AG04449 (cell line): ENCODE measurements at regions of chr11 and their contacts with region 1.

Region 1: GRCh38 chr11:64240394-64241174 is at the start of gene FKBP2:
- DNase-seq: peak; percentile 64
- H3K4me3 ChIP-seq: peak within 1 kb of the TSS; percentile 88
- CTCF ChIP-seq: no peak

Region 2: DNA sequence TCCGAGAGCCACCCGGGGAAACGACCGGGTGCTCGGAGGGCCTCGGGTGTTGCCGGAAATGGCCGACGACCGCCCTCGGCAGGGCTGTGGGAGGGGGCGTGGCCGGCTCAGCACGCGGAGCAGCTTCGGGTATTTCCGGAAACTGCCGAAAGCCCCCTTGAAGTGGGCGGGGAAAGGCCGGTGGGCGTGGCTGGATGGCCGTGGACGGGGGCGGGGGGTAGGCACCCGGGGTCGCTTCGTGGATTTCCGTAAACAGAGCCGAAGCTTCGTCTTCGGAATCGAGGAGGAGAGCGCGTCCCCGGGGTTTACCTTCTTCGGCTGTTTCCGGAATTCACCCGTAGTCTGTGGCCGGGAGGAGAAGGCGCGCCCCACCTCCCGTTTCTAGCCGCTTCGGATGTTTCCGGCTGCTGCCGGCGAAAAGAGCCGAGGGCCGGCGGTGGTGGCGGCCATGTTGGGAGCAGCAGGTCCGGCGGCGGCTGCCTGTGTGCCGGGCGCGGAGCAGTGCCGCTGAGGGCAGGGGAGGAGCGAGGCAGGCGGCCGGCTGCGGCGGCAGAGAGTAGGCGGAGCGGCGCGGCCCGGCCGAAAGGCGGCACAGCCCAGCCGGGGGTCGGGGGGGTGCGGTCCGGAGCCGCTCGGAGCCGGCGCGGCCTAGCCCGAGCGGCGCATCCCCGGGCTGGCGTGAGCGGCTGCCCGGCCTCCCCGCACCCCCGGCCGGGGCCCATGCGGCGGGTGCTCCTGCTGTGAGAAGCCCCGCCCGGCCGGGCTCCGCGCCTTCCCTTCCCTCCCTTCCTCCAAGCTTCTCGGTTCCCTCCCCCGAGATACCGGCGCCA is 401.7 kb before region 1 on chr11 and contains the start of gene MARK2:
- CTCF ChIA-PET with region 1: no interaction called
- POLR2A ChIA-PET with region 1: no interaction called
- DNase-seq: peak; percentile 79
- H3K4me3 ChIP-seq: peak within 1 kb of the TSS; percentile 78
- CTCF ChIP-seq: no peak

Region 3: DNA sequence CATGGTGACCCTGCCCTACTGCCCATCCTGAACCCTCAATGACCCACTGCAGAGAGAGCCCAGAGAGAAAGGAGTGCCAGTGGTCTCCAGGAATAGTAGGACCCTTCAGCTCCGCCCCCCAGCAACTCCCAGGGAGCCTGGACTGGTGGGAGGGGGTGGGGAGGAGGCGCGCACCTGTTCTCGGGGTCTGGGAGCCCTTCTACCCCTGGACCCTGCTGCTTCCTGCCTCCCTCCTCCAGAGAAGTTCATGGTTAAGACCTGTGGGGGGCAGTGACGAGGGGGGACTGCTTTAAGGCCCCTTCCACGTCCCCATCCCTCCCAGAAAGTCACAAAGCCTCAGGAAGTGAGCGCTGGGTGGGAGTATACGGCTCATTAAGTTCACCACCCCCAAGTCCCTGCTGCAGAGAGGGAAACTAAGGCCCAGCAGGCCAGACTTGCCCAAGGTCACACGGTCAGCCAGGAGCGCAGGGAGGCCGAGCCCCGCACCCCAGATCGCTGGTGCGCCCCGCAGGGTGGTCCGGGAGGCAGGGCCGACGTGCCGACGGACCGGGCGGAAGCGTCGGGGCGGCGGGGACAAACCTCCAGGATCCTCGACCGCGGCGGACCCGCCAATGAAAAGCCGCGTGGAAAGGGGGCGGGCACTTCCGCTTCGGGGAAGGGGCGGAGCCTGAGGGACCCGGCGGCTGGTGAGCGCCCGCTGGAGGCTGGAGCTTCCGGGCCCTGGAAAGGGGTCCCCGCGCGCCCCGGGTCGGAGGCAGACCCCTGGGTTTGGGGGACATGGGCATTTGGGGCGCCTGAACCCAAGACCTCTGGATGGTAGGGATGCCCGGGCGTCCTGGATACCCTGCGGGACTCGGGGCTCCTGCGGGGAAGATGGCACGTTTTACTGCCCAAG is 14.7 kb before region 1 on chr11 and contains the starts of genes NUDT22 and TRPT1:
- CTCF ChIA-PET with region 1: interaction called, 3 read pairs
- POLR2A ChIA-PET with region 1: interaction called, 20 read pairs
- DNase-seq: no peak
- H3K4me3 ChIP-seq: peak within 1 kb of the TSS; percentile 91
- CTCF ChIP-seq: peak; percentile 27

Region 4: DNA sequence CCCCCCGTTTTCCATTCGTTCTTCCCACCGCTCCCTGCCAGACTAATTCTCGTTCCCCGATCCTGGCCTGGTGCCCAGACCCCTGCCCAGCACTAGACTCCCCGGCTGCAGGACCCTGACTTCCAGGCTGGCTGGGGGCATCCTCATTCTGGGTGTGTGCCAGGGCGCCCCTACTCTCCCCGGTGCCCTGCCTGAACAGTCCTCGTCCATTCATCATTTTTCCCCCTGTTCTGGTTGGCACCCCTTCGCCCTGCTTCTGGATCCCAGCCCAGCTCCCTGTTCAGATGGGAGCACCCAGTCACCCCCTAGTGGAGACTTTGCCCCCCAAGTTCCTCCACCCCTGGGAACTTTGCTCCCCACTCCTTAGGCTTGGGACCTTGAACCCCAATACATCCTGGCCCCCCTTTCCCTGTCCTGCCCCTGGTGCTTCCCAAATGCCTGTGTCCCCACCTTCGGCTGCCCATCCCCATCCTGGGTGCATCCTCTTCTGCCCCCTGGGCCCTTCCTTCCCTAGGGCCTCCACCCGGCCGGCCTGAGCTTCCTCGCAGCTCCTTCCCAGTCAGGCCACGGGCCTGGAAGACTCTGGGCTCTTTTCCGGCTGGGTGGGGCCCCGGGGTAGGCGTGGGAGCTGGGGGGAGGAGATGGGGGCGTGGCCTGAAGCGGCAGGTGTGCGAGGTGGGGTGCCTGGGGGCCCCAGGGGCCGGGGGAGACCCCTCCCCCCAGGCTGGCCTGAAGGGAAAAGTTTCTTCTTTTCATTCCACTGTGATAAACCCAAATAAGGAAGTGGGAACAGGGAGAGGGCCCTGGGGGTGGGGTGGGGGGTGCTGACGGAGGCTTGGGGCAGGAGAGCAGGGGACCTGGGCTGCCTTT is 11.7 kb after region 1 on chr11:
- CTCF ChIA-PET with region 1: interaction called, 25 read pairs
- POLR2A ChIA-PET with region 1: interaction called, 13 read pairs
- DNase-seq: no peak
- H3K4me3 ChIP-seq: peak overlapping the region; percentile 82
- CTCF ChIP-seq: peak; percentile 44